Activated naive CD4-positive, alpha-beta T cell treated with anti-CD3 and anti-CD28 coated beads for 36 hours (primary cell): ENCODE measurements at regions of chr7 and their contacts with region 1.

Region 1: GRCh38 chr7:50369143-50370026 is 64.9 kb downstream of the IKZF1 start:
- DNase-seq: peak; percentile 67
- H3K4me3 Mint-ChIP-seq: no peak overlapping the region
- H3K27ac Mint-ChIP-seq: peak overlapping the region; percentile 92
- H3K4me1 Mint-ChIP-seq: peaks cover 96% of the 10 kb centered on the region
- H3K27me3 Mint-ChIP-seq: no peaks in the 10 kb centered on the region

Region 2: DNA sequence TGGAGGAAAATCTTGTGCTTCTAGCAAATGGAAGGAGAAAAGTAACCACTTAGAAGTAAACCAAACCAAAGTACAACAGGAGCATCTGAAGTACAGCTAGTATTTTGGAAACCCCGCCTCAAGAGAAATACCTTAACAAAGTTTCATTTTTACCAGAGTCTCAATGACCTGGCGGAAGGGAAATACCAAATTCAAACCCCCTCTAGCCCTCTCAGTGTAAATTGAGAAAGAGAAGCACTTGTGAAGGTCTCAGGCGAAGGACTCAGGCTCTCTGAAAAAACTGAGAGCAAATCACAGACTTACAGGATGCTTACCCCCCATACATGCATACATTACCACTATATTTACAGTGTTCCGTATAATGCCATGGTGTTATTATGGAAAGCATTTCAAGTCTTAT is 346.4 kb before region 1 on chr7:
- CTCF ChIA-PET with region 1: no interaction called
- intact Hi-C with region 1: no loop called
- DNase-seq: no peak
- H3K4me3 Mint-ChIP-seq: no peak overlapping the region
- H3K27ac Mint-ChIP-seq: no peak overlapping the region
- H3K4me1 Mint-ChIP-seq: no peaks in the 10 kb centered on the region
- H3K27me3 Mint-ChIP-seq: no peaks in the 10 kb centered on the region

Region 3: GRCh38 chr7:50147951-50148808 is 221.2 kb before region 1 on chr7:
- CTCF ChIA-PET with region 1: interaction called, 26 read pairs
- intact Hi-C with region 1: loop called (anchors 1 kb)
- DNase-seq: peak; percentile 73
- H3K4me3 Mint-ChIP-seq: peak overlapping the region; percentile 34
- H3K27ac Mint-ChIP-seq: peak overlapping the region; percentile 91
- H3K4me1 Mint-ChIP-seq: peaks cover 91% of the 10 kb centered on the region
- H3K27me3 Mint-ChIP-seq: no peaks in the 10 kb centered on the region

Region 4: GRCh38 chr7:50266635-50267386 is 102.6 kb before region 1 on chr7:
- CTCF ChIA-PET with region 1: interaction called, 13 read pairs
- intact Hi-C with region 1: loop called (anchors 1 kb)
- DNase-seq: peak; percentile 84
- H3K4me3 Mint-ChIP-seq: peak overlapping the region; percentile 55
- H3K27ac Mint-ChIP-seq: peak overlapping the region; percentile 94
- H3K4me1 Mint-ChIP-seq: peaks cover 91% of the 10 kb centered on the region
- H3K27me3 Mint-ChIP-seq: no peaks in the 10 kb centered on the region

Region 5: GRCh38 chr7:50317221-50317678 is 52.1 kb before region 1 on chr7:
- CTCF ChIA-PET with region 1: interaction called, 137 read pairs
- intact Hi-C with region 1: loop called (anchors 1 kb)
- DNase-seq: peak; percentile 77
- H3K4me3 Mint-ChIP-seq: peak overlapping the region; percentile 71
- H3K27ac Mint-ChIP-seq: peak overlapping the region; percentile 99
- H3K4me1 Mint-ChIP-seq: peaks cover 90% of the 10 kb centered on the region
- H3K27me3 Mint-ChIP-seq: no peaks in the 10 kb centered on the region

Region 6: DNA sequence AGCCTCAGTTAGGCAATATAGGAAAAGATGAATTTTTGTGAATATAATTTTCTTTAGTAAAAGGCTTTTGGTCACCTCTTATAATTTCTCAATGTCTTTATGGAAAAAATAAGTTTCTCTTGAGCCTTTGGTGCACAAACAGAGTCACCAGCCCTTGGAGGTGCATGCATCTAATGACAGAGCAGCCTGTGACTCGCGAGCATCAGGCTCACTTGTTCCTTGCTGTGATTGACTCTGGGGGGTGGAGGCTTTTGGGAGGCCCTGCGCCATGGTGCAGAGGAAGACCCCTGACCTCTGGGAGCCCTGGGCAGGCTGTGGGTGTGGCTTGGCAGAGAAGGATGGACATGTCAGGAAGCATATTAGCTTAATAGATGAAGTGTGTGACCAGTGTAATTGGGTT is 20.6 kb after region 1 on chr7:
- CTCF ChIA-PET with region 1: interaction called, 6 read pairs
- intact Hi-C with region 1: loop called (anchors 1 kb)
- DNase-seq: no peak
- H3K4me3 Mint-ChIP-seq: no peak overlapping the region
- H3K27ac Mint-ChIP-seq: peak overlapping the region; percentile 73
- H3K4me1 Mint-ChIP-seq: peaks cover 77% of the 10 kb centered on the region
- H3K27me3 Mint-ChIP-seq: no peaks in the 10 kb centered on the region

Region 7: DNA sequence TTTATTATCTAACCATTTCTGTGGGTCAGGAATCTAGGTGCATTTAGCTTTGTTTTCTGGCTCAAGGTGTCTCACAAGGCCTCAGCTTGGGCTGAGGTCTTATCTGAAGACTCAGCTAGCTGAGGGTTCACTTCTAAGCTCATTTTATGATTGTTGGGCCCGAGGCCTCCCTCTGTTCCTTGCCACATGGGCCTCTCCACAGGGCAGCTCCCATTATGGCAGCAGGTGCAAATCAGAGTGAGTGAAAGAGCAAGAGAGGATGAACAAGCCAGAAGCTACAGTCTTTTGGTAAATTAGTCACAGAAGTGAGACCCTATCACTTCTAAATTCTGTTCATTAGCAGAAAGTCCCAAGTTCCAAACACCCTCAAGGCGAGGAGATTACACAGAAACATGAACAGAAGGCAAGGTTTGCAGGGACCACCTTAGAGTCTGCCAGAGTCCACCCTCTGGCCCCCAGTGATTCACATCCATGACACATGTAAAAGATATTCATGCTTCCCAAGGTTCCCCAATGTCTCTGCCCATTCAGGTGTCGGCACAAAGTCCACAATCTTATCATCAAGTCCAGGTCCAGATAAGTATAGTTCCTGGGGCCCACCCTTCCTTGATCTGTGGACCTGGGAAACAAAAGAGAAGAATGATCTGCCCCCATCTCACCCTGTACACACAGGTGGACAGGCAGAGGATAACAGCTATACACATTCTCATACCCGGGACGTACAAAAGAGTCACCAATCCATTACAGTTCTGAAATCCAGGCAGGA is 57.1 kb after region 1 on chr7:
- CTCF ChIA-PET with region 1: no interaction called
- intact Hi-C with region 1: no loop called
- DNase-seq: no peak
- H3K4me3 Mint-ChIP-seq: no peak overlapping the region
- H3K27ac Mint-ChIP-seq: no peak overlapping the region
- H3K4me1 Mint-ChIP-seq: no peaks in the 10 kb centered on the region
- H3K27me3 Mint-ChIP-seq: no peaks in the 10 kb centered on the region

Region 8: GRCh38 chr7:50449881-50450589 is 80.7 kb after region 1 on chr7 and contains the start of gene FIGNL1:
- CTCF ChIA-PET with region 1: no interaction called
- intact Hi-C with region 1: loop called (anchors 1 kb)
- DNase-seq: peak; percentile 86
- H3K4me3 Mint-ChIP-seq: peak within 1 kb of the TSS; percentile 94
- H3K27ac Mint-ChIP-seq: peak within 1 kb of the TSS; percentile 91
- H3K4me1 Mint-ChIP-seq: peaks cover 45% of the 10 kb centered on the region
- H3K27me3 Mint-ChIP-seq: no peaks in the 10 kb centered on the region
- total RNA-seq, gene FIGNL1: 43.7 to 44.4 TPM